A673 (cell line): ENCODE measurements at regions of chr9 and their contacts with region 1.

Region 1: GRCh38 chr9:89549031-89549644 is 51.2 kb upstream of the SEMA4D start:
- DNase-seq: peak; percentile 77
- H3K4me3 ChIP-seq: no peak overlapping the region
- H3K27ac ChIP-seq: no peak overlapping the region
- H3K4me1 ChIP-seq: no peaks in the 10 kb centered on the region
- H3K27me3 ChIP-seq: no peaks in the 10 kb centered on the region
- CTCF ChIP-seq: peak; percentile 95

Region 2: GRCh38 chr9:89278997-89279739 is 270.0 kb before region 1 on chr9:
- CTCF ChIA-PET with region 1: no interaction called
- POLR2A ChIA-PET with region 1: no interaction called
- intact Hi-C with region 1: no loop called
- DNase-seq: peak; percentile 74
- H3K4me3 ChIP-seq: no peak overlapping the region
- H3K27ac ChIP-seq: no peak overlapping the region
- H3K4me1 ChIP-seq: no peaks in the 10 kb centered on the region
- H3K27me3 ChIP-seq: no peaks in the 10 kb centered on the region
- CTCF ChIP-seq: peak; percentile 76

Region 3: GRCh38 chr9:89318123-89319014 is 230.8 kb before region 1 on chr9 and contains the start of gene SECISBP2:
- CTCF ChIA-PET with region 1: interaction called, 6 read pairs
- POLR2A ChIA-PET with region 1: no interaction called
- intact Hi-C with region 1: loop called (anchors 1 kb)
- DNase-seq: peak; percentile 98
- H3K4me3 ChIP-seq: peak within 1 kb of the TSS; percentile 63
- H3K27ac ChIP-seq: peak within 1 kb of the TSS; percentile 99
- H3K4me1 ChIP-seq: peaks cover 31% of the 10 kb centered on the region
- H3K27me3 ChIP-seq: no peaks in the 10 kb centered on the region
- CTCF ChIP-seq: peak; percentile 83
- total RNA-seq, gene SECISBP2: 44.4 and 54.1 TPM in 2 replicates

Region 4: GRCh38 chr9:89358985-89359384 is 190.2 kb before region 1 on chr9:
- CTCF ChIA-PET with region 1: interaction called, 3 read pairs
- POLR2A ChIA-PET with region 1: no interaction called
- intact Hi-C with region 1: loop called (anchors 10 kb)
- DNase-seq: no peak
- H3K4me3 ChIP-seq: no peak overlapping the region
- H3K27ac ChIP-seq: no peak overlapping the region
- H3K4me1 ChIP-seq: no peaks in the 10 kb centered on the region
- H3K27me3 ChIP-seq: no peaks in the 10 kb centered on the region
- CTCF ChIP-seq: no peak

Region 5: GRCh38 chr9:89442981-89443814 is 105.9 kb before region 1 on chr9:
- CTCF ChIA-PET with region 1: no interaction called
- POLR2A ChIA-PET with region 1: no interaction called
- intact Hi-C with region 1: loop called (anchors 10 kb)
- DNase-seq: no peak
- H3K4me3 ChIP-seq: no peak overlapping the region
- H3K27ac ChIP-seq: no peak overlapping the region
- H3K4me1 ChIP-seq: no peaks in the 10 kb centered on the region
- H3K27me3 ChIP-seq: no peaks in the 10 kb centered on the region
- CTCF ChIP-seq: no peak